ENCODE measurements at regions of chr1 and their contacts with region 1.

Region 1: GRCh38 chr1:39408641-39409054 is 82.8 kb upstream of the BMP8A start:
- DNase-seq: peak; percentile 61 to 96 (median 79)
- ATAC-seq: peak; percentile 83
- H3K4me3 ChIP-seq: peak overlapping the region; percentile 61
- H3K4me3 Mint-ChIP-seq: peak overlapping the region; percentile 77
- H3K27ac ChIP-seq: peak overlapping the region in 1 of 2 donors; percentile 21
- H3K27ac Mint-ChIP-seq: no peak overlapping the region
- H3K4me1 ChIP-seq: peaks cover 40% of the 10 kb centered on the region
- H3K4me1 Mint-ChIP-seq: peaks cover 66% of the 10 kb centered on the region
- H3K27me3 ChIP-seq: no peaks in the 10 kb centered on the region
- H3K27me3 Mint-ChIP-seq: no peaks in the 10 kb centered on the region
- CTCF ChIP-seq: no peak

Region 2: DNA sequence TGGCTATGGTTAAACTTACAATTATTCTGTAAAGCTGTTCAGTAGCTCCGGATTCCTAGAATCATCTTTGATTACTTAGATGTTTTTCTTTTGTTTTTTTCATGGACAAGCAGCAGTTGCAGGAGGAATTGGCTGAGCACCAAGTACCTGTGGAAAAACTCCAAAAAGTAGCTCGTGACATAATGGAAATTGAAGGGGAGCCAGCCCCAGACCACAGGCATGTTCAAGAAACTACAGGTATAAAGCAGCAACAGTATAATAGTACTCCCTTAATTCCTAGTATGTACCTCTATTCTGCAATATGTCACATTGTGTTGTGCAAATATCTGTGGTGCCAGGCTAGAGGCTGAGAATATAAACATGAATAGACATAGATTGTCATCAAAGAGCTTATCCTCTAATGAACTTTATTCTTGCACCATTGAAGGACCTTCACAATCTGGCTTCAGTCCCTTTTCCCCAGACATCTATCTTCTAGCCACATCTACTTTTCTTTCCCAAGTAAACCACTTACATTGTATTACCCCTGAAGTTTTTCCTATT is 49.5 kb before region 1 on chr1:
- CTCF ChIA-PET with region 1: interaction called, 14 read pairs
- POLR2A ChIA-PET with region 1: interaction called, 3 read pairs
- intact Hi-C with region 1: no loop called
- DNase-seq: no peak
- ATAC-seq: no peak
- H3K4me3 ChIP-seq: no peak overlapping the region
- H3K4me3 Mint-ChIP-seq: no peak overlapping the region
- H3K27ac ChIP-seq: no peak overlapping the region
- H3K27ac Mint-ChIP-seq: no peak overlapping the region
- H3K4me1 ChIP-seq: no peaks in the 10 kb centered on the region
- H3K4me1 Mint-ChIP-seq: no peaks in the 10 kb centered on the region
- H3K27me3 ChIP-seq: no peaks in the 10 kb centered on the region
- H3K27me3 Mint-ChIP-seq: no peaks in the 10 kb centered on the region
- CTCF ChIP-seq: no peak

Region 3: DNA sequence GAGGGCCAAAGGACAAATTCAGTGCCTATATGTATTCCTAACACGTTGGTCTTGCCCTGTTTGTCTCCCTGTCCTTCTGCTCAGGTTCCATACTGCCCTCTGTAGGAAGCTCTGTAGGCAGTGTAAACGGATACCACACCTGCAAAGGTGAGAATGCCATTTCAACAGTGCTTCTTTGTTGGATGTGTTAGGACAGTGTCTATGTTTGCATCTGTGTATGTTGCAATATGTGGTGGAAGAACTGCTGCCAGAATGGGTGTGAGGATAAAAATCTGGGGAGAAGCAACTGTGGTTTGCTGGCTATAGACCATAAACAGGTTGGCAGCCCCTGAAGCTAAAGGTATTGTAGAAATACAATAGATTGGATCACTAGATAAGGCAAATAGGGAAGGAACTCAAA is 30.3 kb before region 1 on chr1:
- CTCF ChIA-PET with region 1: interaction called, 22 read pairs
- POLR2A ChIA-PET with region 1: no interaction called
- intact Hi-C with region 1: no loop called
- DNase-seq: peak in 4 of 14 experiments; percentile 9 to 34 (median 30)
- ATAC-seq: no peak
- H3K4me3 ChIP-seq: no peak overlapping the region
- H3K4me3 Mint-ChIP-seq: no peak overlapping the region
- H3K27ac ChIP-seq: no peak overlapping the region
- H3K27ac Mint-ChIP-seq: peak overlapping the region; percentile 27
- H3K4me1 ChIP-seq: no peaks in the 10 kb centered on the region
- H3K4me1 Mint-ChIP-seq: no peaks in the 10 kb centered on the region
- H3K27me3 ChIP-seq: no peaks in the 10 kb centered on the region
- H3K27me3 Mint-ChIP-seq: no peaks in the 10 kb centered on the region
- CTCF ChIP-seq: peak; percentile 42

Region 4: DNA sequence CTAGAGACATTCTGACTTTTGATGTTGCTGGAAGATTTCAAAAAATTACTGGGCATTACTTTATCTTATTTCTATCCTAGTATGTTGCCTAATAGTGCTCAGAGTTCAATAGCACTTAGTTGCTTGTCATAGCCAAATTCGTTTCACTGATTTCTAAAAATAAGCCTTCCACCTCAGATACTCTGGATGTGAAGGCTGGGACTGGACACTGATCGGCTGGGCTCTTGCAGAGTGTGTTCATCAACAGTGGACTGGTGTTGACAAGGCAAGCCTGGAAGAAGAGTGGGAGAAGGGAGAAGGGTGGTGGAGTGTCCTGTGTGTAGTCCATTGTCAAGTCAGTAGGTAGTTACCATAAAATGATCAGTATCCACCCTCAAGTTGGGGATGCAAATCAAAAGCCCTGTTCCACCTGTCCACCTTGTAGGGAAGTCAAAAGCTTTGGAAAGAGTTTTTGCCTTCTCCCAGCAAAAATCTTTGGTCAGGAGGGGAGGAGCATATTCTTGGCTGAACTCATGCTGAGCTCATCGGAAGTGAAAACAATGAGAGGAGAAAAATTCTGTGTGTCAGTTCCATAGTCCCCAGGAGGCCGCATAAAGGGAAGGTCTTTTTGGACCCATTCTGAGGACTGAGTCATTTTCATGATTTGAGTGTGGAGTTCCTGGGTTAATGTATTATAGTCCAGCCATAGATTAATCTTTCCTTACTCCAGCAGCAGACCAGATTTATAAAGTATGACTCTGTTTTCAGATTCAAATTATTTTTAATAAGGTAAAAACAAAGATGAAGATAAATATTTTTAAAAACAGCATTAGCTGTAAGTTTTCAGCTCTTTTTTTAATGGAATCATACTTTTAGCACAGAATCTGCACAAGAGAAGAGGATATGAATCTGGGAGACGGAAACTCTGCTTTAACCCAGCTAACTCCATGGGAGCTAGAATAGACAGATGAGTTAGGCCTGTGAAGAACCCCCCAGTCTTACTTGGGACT is 16.7 kb before region 1 on chr1:
- CTCF ChIA-PET with region 1: interaction called, 25 read pairs
- POLR2A ChIA-PET with region 1: interaction called, 13 read pairs
- intact Hi-C with region 1: loop called (anchors 2 kb)
- DNase-seq: no peak
- ATAC-seq: no peak
- H3K4me3 ChIP-seq: no peak overlapping the region
- H3K4me3 Mint-ChIP-seq: no peak overlapping the region
- H3K27ac ChIP-seq: no peak overlapping the region
- H3K27ac Mint-ChIP-seq: peak overlapping the region; percentile 52
- H3K4me1 ChIP-seq: peaks cover 28% of the 10 kb centered on the region
- H3K4me1 Mint-ChIP-seq: peaks cover 72% of the 10 kb centered on the region
- H3K27me3 ChIP-seq: no peaks in the 10 kb centered on the region
- H3K27me3 Mint-ChIP-seq: no peaks in the 10 kb centered on the region
- CTCF ChIP-seq: no peak

Region 5: DNA sequence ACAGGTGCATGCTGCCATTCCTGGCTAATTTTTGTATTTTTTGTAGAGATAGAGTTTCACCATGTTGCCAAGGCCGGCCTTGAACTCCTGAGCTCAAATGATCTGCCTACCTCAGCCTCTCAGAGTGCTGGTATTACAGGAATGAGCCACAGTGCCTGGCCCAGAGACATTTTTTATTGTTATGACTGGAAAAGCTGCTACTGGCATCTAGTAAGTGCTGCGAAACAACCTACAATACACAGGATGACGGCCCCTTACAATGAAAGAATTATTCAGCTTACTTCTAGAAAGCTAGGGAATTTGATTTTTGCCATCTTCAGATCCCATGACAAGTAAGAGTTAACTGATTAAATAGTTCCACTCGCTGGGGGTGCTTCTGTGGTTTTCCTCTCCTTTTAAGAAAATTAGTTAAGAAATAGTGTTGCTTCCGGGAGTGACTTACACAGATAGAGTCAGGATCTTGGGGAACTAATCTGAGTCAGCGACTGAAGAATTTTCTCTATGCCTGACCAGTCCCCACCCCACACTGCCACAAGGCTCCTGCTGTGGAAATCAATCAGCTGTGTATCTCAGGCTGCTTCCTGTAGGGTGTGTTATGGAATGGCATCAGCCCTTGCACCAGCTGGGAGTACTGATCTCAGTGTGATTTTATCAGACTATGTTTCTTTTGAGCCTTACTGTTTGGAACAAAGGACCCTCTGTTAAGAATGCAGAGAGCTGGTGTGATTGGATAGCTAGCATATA is 10.2 kb before region 1 on chr1:
- CTCF ChIA-PET with region 1: interaction called, 25 read pairs
- POLR2A ChIA-PET with region 1: interaction called, 14 read pairs
- intact Hi-C with region 1: loop called (anchors 2 kb)
- DNase-seq: peak in 6 of 14 experiments; percentile 12 to 60 (median 44)
- ATAC-seq: peak; percentile 54
- H3K4me3 ChIP-seq: no peak overlapping the region
- H3K4me3 Mint-ChIP-seq: peak overlapping the region; percentile 61
- H3K27ac ChIP-seq: no peak overlapping the region
- H3K27ac Mint-ChIP-seq: peak overlapping the region; percentile 74
- H3K4me1 ChIP-seq: peaks cover 38% of the 10 kb centered on the region
- H3K4me1 Mint-ChIP-seq: peaks cover 63% of the 10 kb centered on the region
- H3K27me3 ChIP-seq: no peaks in the 10 kb centered on the region
- H3K27me3 Mint-ChIP-seq: no peaks in the 10 kb centered on the region
- CTCF ChIP-seq: no peak

Region 6: GRCh38 chr1:39422614-39423013 is 14.0 kb after region 1 on chr1:
- CTCF ChIA-PET with region 1: interaction called, 19 read pairs
- POLR2A ChIA-PET with region 1: interaction called, 3 read pairs
- intact Hi-C with region 1: no loop called
- DNase-seq: no peak
- ATAC-seq: no peak
- H3K4me3 ChIP-seq: no peak overlapping the region
- H3K4me3 Mint-ChIP-seq: no peak overlapping the region
- H3K27ac ChIP-seq: no peak overlapping the region
- H3K27ac Mint-ChIP-seq: no peak overlapping the region
- H3K4me1 ChIP-seq: no peaks in the 10 kb centered on the region
- H3K4me1 Mint-ChIP-seq: peaks cover 26% of the 10 kb centered on the region
- H3K27me3 ChIP-seq: no peaks in the 10 kb centered on the region
- H3K27me3 Mint-ChIP-seq: no peaks in the 10 kb centered on the region
- CTCF ChIP-seq: no peak